GM13977 (cell line): ENCODE measurements at regions of chr22 and their contacts with region 1.

Region 1: GRCh38 chr22:20298803-20299735 is 20.8 kb downstream of the DGCR6L start:
- DNase-seq: peak; percentile 83
- CTCF ChIP-seq: no peak

Region 2: GRCh38 chr22:19970479-19971275 is 328.4 kb before region 1 on chr22:
- in situ Hi-C with region 1: loop called (anchors 25 kb)
- DNase-seq: peak; percentile 92
- CTCF ChIP-seq: peak; percentile 98

Region 3: DNA sequence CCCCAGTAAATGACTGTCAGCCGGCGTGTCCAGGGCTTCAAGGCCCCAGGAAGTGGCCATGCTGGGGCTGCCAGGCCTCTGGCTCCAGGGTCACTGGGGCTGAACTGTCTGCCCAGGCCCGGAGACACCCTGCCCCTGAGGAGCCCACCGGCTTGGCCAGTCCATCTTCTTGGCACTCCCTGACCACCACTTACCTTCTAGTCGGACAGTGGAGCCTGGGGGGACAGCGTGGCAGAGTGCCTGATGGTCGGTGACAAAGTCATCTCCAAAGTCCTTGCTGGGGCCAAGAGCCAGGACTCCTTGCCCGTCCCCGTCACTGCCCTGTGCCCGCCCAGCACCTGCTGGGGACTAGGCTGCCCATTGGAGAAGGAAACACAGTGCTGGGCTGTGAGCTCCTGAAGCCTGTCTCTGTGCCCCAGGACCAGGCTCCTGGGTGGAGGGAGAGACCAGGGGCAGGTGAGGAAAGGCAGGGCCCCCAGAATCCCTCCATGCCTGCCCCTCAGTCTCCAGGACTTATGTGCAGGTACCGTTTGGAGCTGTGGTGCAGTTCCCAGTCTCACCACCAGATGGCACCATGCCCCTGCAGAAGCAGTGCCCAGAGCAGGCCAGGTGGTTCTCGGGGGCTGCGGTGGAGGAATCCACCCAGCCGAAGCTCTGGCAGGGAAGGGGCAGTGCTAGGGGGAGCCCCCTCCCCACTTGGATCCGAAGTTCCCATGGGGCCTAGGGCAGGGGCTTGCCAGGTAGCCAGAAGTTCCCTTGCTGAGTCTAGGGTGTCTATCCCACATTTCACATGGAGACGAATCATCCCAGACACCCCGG is 142.2 kb before region 1 on chr22:
- in situ Hi-C with region 1: loop called (anchors 10 kb)
- DNase-seq: peak; percentile 96
- CTCF ChIP-seq: peak; percentile 97